Mammary epithelial cell (primary cell): ENCODE measurements at regions of chrX and their contacts with region 1.

Region 1: GRCh38 chrX:48703642-48704481 is 7.3 kb downstream of the SUV39H1 start:
- DNase-seq: peak; percentile 94
- H3K4me3 ChIP-seq: no peak overlapping the region
- H3K27ac ChIP-seq: peak overlapping the region; percentile 27
- H3K4me1 ChIP-seq: peaks cover 22% of the 10 kb centered on the region
- H3K27me3 ChIP-seq: no peaks in the 10 kb centered on the region
- CTCF ChIP-seq: peak in 1 of 2 donors; percentile 18

Region 2: GRCh38 chrX:48589482-48590162 is 114.2 kb before region 1 on chrX:
- CTCF ChIA-PET with region 1: no interaction called
- dilution Hi-C with region 1: no loop called
- in situ Hi-C with region 1: no loop called
- intact Hi-C with region 1: no loop called
- DNase-seq: no peak
- H3K4me3 ChIP-seq: no peak overlapping the region
- H3K27ac ChIP-seq: no peak overlapping the region
- H3K4me1 ChIP-seq: peaks cover 17% of the 10 kb centered on the region
- H3K27me3 ChIP-seq: no peaks in the 10 kb centered on the region
- CTCF ChIP-seq: no peak

Region 3: GRCh38 chrX:48737213-48737938 is 33.5 kb after region 1 on chrX:
- CTCF ChIA-PET with region 1: no interaction called
- dilution Hi-C with region 1: loop called (anchors 5 kb)
- in situ Hi-C with region 1: no loop called
- intact Hi-C with region 1: no loop called
- DNase-seq: peak; percentile 91
- H3K4me3 ChIP-seq: peak overlapping the region; percentile 53 to 61 (median 60)
- H3K27ac ChIP-seq: peak overlapping the region; percentile 63
- H3K4me1 ChIP-seq: peaks cover 7% of the 10 kb centered on the region
- H3K27me3 ChIP-seq: no peaks in the 10 kb centered on the region
- CTCF ChIP-seq: no peak

Region 4: GRCh38 chrX:48776818-48777439 is 73.1 kb after region 1 on chrX:
- CTCF ChIA-PET with region 1: no interaction called
- dilution Hi-C with region 1: loop called (anchors 5 kb)
- in situ Hi-C with region 1: no loop called
- intact Hi-C with region 1: no loop called
- DNase-seq: no peak
- H3K4me3 ChIP-seq: no peak overlapping the region
- H3K27ac ChIP-seq: no peak overlapping the region
- H3K4me1 ChIP-seq: no peaks in the 10 kb centered on the region
- H3K27me3 ChIP-seq: no peaks in the 10 kb centered on the region
- CTCF ChIP-seq: no peak